Dendritic cell treated with granulocyte-macrophage colony-stimulating factor and Interleukin-4, amounts not matched to agents 40 ng/mL and 50 ng/mL, for 4 days (primary cell): ENCODE measurements at regions of chr1 and their contacts with region 1.

Region 1: DNA sequence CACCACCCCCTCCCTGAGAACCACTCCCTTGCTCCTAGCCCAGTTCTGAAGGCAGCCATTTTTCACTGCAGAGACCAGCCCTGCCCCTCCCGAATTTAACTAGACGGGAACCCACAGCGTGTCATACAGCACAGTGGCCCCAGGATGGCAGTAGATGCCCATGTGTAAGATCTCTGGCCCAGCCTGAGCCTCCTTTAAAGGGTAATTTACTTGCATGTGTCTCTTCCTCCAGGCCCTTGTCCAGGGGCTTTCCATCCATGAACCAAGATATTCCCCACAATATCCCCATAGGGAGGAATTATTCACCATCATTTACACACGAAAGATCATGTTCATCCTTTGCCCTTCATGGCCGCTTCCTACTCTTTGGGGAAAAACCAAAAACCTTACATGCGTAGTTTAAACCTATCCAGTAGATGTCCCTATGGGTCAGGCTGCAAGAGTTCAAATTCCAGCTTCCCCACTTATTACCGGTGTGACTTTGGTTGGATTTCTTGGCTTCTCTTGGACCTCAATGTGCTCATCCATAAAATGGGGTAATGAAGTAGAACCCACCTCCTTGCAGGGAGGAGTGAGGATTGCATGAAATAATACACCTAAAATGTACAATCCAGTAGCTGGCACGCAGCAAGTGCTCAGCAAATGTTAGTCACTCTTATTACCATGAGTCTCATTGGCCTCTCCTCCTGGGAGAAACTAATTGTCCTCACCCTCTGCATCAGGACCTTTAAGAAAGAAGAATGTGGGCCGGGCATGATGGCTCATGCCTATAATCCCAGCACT is 4.0 kb upstream of the LACTBL1 start:
- H3K4me3 Mint-ChIP-seq: no peak overlapping the region
- H3K27ac Mint-ChIP-seq: no peak overlapping the region
- H3K4me1 Mint-ChIP-seq: peaks cover 8% of the 10 kb centered on the region
- H3K27me3 Mint-ChIP-seq: peaks cover 24% of the 10 kb centered on the region

Region 2: GRCh38 chr1:23004112-23004511 is 27.5 kb after region 1 on chr1:
- intact Hi-C with region 1: no loop called
- H3K4me3 Mint-ChIP-seq: no peak overlapping the region
- H3K27ac Mint-ChIP-seq: no peak overlapping the region
- H3K4me1 Mint-ChIP-seq: no peaks in the 10 kb centered on the region
- H3K27me3 Mint-ChIP-seq: peaks cover 12% of the 10 kb centered on the region

Region 3: DNA sequence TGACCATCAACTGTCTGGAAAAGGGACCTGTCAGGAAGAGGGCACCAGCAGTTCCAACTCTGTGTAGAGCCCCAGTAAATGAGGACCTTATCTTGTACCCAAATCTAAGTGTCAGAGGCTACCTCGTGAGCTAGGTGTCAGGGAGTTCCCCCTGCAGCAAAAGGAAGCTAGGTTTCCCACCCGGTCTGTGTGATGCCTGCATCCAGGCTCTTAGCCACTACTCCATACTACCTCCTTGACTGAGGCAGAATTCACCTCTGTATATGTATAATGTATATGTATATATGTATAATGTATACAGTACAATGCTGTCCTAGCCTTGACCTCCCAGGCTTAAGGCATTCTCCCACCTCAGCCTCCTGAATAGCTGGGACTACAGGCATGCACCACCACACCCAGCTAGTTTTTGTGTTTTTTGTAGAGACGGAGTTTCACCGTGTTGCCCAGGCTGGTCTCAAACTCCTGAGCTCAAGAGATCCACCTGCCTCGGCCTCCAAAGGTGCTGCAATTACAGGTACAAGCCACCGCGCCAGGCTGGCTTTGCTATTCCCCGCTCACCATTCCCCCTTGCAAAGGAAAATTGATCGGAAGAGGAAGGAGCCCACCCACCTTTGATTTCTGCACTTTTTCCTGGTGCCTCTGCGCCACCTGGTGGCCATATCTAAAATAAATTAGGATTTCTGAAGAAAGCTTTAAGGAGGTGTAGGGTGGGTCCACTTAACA is 207.7 kb after region 1 on chr1:
- intact Hi-C with region 1: loop called (anchors 1 kb)
- H3K4me3 Mint-ChIP-seq: peak overlapping the region; percentile 37
- H3K27ac Mint-ChIP-seq: no peak overlapping the region
- H3K4me1 Mint-ChIP-seq: peaks cover 10% of the 10 kb centered on the region
- H3K27me3 Mint-ChIP-seq: peaks cover 21% of the 10 kb centered on the region

Region 4: DNA sequence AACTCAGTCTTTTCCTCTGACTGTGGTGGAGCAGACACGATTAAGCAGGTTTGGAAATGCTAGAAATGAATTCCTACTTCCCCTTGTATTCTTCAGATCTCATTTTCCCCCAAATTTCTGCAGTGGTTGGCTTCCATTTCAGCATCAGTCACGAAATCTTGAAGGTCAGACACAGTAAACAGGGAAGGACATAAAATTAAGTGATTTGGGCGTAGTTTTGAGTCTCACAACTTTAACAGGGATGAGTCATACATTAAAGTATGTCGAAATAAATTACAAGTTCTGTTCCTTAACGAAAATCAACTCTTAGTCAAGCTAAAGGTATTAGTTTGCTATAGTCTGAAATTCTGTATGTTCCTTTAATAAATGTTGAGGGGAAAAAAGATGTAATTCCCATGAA is 306.3 kb after region 1 on chr1:
- intact Hi-C with region 1: loop called (anchors 10 kb)
- H3K4me3 Mint-ChIP-seq: no peak overlapping the region
- H3K27ac Mint-ChIP-seq: peak overlapping the region; percentile 76
- H3K4me1 Mint-ChIP-seq: peaks cover 53% of the 10 kb centered on the region
- H3K27me3 Mint-ChIP-seq: no peaks in the 10 kb centered on the region